ENCODE measurements at regions of chr11 and their contacts with region 1.

Region 1: DNA sequence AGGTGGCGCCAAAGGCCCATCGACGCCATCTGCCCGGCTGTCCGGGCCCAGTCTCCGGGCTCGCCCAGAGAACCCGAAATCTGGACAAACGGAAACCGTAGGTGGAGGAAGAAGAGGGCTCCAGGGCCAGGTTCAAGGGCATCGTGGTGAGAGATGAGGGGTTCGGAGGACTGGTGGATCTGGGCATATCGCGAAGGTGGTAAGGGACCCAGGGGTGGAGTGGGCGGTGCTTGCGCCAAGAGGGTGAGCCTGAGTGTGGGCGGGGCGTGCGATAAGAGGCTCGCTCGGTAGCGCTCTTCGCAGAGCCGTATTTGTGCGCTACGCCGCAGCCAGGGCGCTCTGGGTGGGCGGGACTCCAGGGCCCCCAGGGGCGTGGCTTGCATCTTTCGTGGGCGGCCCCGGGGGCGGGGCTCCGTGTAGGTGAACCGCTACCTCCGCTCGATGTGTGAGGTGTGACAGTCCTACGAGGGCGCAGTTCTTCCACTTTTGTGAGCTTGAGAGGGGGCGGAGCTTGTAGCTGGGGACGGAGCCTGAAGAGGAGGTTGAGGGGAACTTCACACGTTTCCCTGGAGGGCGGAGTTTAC is 4.8 kb downstream of the CD248 start:
- H3K4me3 ChIP-seq: peak overlapping the region; percentile 50
- H3K27ac ChIP-seq: peak overlapping the region; percentile 52; the same call in 1 of the 2 replicates
- H3K4me1 ChIP-seq: no peaks in the 10 kb centered on the region
- CTCF ChIP-seq: peak; percentile 81

Region 2: GRCh38 chr11:66288671-66289547 is 23.1 kb before region 1 on chr11 and contains the start of gene YIF1A:
- CTCF ChIA-PET with region 1: interaction called, 9 read pairs
- POLR2A ChIA-PET with region 1: interaction called, 32 read pairs
- H3K4me3 ChIP-seq: peak within 1 kb of the TSS; percentile 79
- H3K27ac ChIP-seq: peak within 1 kb of the TSS; percentile 44; the same call in 1 of the 2 replicates
- H3K4me1 ChIP-seq: no peaks in the 10 kb centered on the region
- CTCF ChIP-seq: peak; percentile 30; the same call in 1 of the 2 replicates

Region 3: DNA sequence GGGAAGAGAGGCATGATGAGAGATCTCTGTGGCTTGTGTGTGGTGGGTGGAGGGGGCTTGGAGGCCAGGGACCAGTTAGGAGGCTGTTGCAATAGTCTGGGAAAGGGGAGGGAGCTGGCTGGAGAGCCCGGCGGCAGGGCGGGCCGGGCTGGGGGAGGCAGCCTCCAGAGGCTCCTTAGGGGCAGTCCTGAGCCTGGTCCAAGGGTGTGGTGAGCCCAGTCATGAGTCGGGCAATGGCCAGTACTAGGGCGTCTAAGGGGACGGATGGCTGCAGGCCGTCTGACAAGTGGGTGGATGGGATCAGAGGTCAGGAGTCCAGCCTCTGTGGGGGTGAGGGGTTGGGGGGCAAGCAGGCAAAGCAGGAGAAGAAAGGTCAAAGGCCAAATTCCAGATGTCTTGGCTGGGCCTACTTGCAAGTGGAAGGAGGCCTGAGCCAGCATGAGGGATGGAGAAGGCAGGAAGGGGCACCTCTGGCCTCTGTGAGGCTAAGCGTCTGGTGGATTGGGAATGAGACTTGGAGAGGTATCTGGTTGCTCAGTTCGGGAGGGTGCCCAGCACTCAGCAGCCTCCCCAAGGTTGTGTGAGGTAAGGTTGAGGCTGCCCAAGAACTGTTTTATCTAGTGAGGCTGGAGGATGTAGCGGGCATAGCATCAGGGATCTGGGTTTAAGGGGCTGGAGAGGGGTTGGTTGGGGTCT is 10.8 kb after region 1 on chr11:
- CTCF ChIA-PET with region 1: interaction called, 19 read pairs
- POLR2A ChIA-PET with region 1: interaction called, 3 read pairs
- H3K4me3 ChIP-seq: no peak overlapping the region
- H3K27ac ChIP-seq: no peak overlapping the region
- H3K4me1 ChIP-seq: no peaks in the 10 kb centered on the region
- CTCF ChIP-seq: no peak

Region 4: DNA sequence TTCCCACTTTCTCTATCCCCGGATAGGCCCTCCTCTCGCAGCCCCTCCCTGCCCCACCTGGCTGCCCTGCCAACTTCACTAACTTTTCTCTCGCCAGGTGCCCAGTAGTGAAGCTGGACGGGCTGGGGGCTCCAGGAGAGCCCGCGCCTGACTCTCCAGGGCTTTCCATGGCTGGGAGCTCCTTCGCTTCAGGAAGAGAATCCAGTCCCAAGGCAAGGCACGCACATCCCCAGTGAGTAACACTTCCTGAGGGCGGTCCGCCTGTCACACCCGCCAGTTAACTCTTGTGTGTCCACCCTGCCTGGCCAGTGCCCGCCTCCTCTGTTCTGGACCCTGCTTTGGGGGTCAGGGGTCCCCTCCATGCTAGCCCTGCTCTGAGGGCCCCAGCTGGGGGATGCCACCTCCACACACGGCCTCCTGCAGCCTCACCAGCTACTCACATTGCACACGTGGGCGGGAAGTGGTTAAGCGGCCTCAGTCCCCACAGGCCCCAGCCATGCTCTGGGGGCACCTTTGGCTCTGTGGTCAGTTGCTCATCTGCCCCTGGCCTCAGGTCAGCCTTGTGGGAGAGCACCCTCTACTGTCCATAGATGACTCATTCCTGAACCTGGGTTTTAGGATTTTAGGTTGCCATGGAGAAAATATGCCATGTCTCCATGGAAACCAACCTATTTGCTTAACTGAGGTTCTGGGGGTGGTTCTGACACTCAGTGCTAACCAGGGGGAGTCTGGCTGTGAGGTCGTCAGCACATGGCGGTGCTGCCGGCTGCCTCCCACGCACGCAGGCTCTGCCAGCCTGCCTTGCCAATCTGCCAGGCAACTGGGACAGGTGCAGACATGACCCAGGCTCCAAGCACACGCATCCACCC is 24.4 kb after region 1 on chr11 and contains the start of gene RIN1:
- CTCF ChIA-PET with region 1: interaction called, 19 read pairs
- POLR2A ChIA-PET with region 1: interaction called, 10 read pairs
- H3K4me3 ChIP-seq: no peak within 1 kb of the TSS
- H3K27ac ChIP-seq: no peak within 1 kb of the TSS
- H3K4me1 ChIP-seq: no peaks in the 10 kb centered on the region
- CTCF ChIP-seq: peak; percentile 49; the same call in 1 of the 2 replicates

Region 5: GRCh38 chr11:66386171-66387069 is 74.4 kb after region 1 on chr11:
- CTCF ChIA-PET with region 1: interaction called, 29 read pairs
- POLR2A ChIA-PET with region 1: interaction called, 11 read pairs
- H3K4me3 ChIP-seq: no peak overlapping the region
- H3K27ac ChIP-seq: no peak overlapping the region
- H3K4me1 ChIP-seq: no peaks in the 10 kb centered on the region
- CTCF ChIP-seq: peak; percentile 50

Measured in HEK293 (cell line).